CD14-positive monocyte (primary cell): ENCODE measurements at regions of chr17 and their contacts with region 1.

Region 1: DNA sequence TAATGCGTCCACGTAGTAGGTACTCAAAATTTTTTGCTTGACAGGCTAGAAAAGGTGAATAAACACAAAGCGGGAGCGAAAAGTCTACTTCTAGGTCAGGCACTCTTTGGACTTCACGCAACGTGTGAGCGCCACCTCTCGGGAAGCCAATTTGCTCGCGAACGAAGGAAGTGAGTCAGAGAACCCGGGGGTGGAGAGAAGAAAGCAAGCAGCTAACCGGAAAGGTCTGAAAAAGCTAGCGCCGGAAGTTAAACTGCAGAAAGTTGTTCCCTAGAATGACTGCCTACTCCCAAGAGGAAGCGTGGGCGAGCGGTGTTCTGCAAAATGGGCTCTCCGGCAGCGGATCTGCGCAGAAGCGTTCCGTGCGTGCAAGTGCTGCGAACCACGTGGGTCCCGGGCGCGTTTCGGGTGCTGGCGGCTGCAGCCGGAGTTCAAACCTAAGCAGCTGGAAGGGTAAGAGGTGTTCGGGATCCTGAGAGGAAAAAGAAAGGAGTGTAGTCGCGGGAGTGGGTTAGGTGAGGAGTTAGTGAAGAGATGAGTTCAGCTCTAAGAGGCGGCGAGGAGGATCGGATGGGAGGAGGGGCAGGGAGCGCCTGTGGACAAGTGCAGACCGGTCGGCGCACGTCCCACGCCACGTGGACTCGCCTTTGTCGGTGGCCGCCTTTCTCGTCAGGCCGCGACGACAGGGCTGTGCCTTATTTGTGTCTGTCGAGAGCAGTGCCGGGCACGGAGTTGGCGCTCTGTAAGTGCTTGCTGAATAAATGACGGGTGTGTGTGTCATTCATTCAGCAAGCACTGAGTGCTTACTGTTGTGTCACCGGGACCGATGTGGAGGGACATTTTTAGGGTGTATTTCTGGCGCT is at the start of gene NME1:
- DNase-seq: peak; percentile 97 to 99 (median 99)
- H3K4me3 ChIP-seq: peak within 1 kb of the TSS; percentile 68 to 86 (median 80)
- H3K4me3 Mint-ChIP-seq: no peak within 1 kb of the TSS
- H3K27ac ChIP-seq: peak within 1 kb of the TSS; percentile 55 to 87
- H3K27ac Mint-ChIP-seq: no peak within 1 kb of the TSS
- H3K4me1 ChIP-seq: peaks cover 18 to 19% of the 10 kb centered on the region in 2 donors
- H3K4me1 Mint-ChIP-seq: no peaks in the 10 kb centered on the region
- H3K27me3 ChIP-seq: no peaks in the 10 kb centered on the region
- H3K27me3 Mint-ChIP-seq: peaks cover 0 to 2% (median 0%) of the 10 kb centered on the region in 3 donors
- CTCF ChIP-seq: peak; percentile 76
- polyA plus RNA-seq, gene NME1: 14.8 to 51.4 (median 20.8) TPM

Region 2: DNA sequence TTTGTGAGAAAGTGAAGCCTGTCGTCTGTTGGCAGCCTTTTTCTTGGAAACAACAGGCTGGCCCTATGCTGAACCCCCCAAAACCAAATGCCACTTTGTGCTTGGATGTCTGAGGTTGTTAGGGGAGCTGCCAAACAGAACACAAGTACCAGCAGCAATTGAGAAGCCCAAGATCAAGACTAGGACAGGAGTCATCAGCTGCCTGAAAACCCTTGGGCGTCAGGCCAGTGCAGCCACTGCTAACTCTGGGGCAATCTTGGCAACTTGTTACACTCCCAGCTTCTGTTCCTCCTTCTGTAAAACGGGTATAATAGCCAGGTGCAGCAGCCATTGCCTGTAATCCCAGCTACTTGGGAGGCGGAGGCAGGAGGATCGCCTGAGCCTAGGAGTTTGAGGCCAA is 746.9 kb before region 1 on chr17:
- intact Hi-C with region 1: no loop called
- DNase-seq: no peak
- H3K4me3 ChIP-seq: no peak overlapping the region
- H3K4me3 Mint-ChIP-seq: no peak overlapping the region
- H3K27ac ChIP-seq: no peak overlapping the region
- H3K27ac Mint-ChIP-seq: peak overlapping the region in 1 of 7 donors; percentile 68
- H3K4me1 ChIP-seq: peaks cover 0 to 3% of the 10 kb centered on the region in 2 donors
- H3K4me1 Mint-ChIP-seq: peaks cover 6% of the 10 kb centered on the region
- H3K27me3 ChIP-seq: no peaks in the 10 kb centered on the region
- H3K27me3 Mint-ChIP-seq: peaks cover 3 to 14% (median 7%) of the 10 kb centered on the region in 3 donors
- CTCF ChIP-seq: no peak

Region 3: DNA sequence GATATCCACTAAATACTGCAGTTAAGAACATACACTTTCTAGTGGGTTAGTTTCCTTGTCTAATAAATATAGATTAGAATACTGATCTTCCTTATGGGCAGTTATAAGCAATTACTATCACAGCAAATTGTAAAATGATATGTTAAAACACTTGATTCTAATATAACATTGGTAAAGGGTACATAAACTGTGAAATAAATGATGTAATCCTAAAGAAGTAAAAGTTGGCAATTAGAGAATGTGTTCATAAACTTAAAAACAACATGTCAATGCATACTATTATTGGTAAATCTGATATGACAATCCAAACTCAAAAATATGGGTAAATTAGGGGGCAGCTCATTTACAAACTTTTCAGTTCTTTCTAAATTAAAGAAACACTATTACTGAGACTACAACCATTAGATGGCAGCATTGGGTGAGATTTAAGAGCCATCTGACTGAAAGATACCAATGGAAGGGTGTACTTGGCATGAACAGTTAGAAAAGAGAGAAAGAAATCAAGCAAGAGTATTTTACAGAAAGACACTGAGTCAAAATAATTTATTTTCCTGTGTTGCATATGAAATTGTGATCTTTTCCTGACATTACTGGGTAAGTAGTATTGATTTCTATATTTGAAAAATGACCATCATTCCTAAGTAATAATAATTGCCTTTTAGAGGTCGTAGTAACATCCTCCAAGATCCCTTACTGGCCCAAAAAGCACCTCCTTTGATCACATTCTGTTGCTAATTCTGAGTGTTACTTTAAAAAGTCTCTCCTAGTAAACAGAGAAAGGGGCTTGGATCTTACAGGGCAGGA is 152.4 kb before region 1 on chr17:
- intact Hi-C with region 1: loop called (anchors 2 to 5 kb)
- DNase-seq: peak; percentile 38 to 60 (median 43)
- H3K4me3 ChIP-seq: no peak overlapping the region
- H3K4me3 Mint-ChIP-seq: no peak overlapping the region
- H3K27ac ChIP-seq: peak overlapping the region in 1 of 2 donors; percentile 4
- H3K27ac Mint-ChIP-seq: peak overlapping the region in 1 of 7 donors; percentile 6
- H3K4me1 ChIP-seq: no peaks in the 10 kb centered on the region
- H3K4me1 Mint-ChIP-seq: no peaks in the 10 kb centered on the region
- H3K27me3 ChIP-seq: no peaks in the 10 kb centered on the region
- H3K27me3 Mint-ChIP-seq: peaks cover 0 to 2% (median 0%) of the 10 kb centered on the region in 3 donors
- CTCF ChIP-seq: peak; percentile 64

Region 4: GRCh38 chr17:51463353-51463752 is 309.9 kb after region 1 on chr17:
- intact Hi-C with region 1: no loop called
- DNase-seq: no peak
- H3K4me3 ChIP-seq: no peak overlapping the region
- H3K4me3 Mint-ChIP-seq: no peak overlapping the region
- H3K27ac ChIP-seq: no peak overlapping the region
- H3K27ac Mint-ChIP-seq: no peak overlapping the region
- H3K4me1 ChIP-seq: no peaks in the 10 kb centered on the region
- H3K4me1 Mint-ChIP-seq: no peaks in the 10 kb centered on the region
- H3K27me3 ChIP-seq: no peaks in the 10 kb centered on the region
- H3K27me3 Mint-ChIP-seq: peaks cover 1 to 4% (median 2%) of the 10 kb centered on the region in 3 donors
- CTCF ChIP-seq: no peak